OCI-LY7 (cell line): ENCODE measurements at regions of chr4 and their contacts with region 1.

Region 1: DNA sequence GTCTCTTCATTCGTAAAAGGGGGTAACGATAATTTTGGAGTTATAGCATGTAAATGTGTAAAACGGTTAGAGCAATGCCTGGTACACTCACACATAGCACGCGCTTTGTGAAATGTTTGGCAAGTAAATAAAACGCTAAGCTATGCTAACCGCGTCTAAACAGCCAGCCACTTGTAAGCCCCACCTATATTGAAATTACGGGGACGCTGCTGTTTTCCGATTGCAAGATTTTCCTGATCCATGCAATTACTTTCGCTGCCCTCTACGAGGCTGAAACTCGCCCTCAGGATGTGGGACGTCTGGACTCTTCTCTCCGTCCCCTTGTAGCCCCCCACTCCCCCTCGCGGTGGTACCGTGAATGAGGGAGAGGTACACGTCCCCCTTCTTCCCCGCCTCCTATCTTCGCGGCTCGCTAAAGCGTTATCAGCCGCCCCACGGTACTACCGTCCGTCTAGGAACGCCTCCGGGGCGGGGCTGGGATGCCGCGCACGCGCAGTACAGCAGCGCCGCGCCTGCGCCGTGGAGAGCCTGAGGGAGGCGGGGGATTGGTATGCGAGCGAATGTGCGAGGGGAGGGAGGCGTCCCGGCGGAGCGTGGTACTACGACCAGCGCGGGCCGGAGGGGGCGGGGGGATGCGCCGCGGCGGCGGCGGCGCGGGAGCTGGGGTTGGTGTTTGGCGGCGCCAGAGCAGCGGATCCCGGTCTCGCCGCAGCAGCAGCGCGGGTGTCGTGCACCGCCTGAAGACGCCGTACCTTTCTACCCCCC is at the start of gene STIM2:
- DNase-seq: peak; percentile 98
- H3K4me3 ChIP-seq: peak within 1 kb of the TSS; percentile 93
- H3K27ac ChIP-seq: peak within 1 kb of the TSS; percentile 87
- H3K4me1 ChIP-seq: peaks cover 33% of the 10 kb centered on the region
- CTCF ChIP-seq: peak; percentile 76
- total RNA-seq, gene STIM2: 108 and 122 TPM in 2 replicates

Region 2: DNA sequence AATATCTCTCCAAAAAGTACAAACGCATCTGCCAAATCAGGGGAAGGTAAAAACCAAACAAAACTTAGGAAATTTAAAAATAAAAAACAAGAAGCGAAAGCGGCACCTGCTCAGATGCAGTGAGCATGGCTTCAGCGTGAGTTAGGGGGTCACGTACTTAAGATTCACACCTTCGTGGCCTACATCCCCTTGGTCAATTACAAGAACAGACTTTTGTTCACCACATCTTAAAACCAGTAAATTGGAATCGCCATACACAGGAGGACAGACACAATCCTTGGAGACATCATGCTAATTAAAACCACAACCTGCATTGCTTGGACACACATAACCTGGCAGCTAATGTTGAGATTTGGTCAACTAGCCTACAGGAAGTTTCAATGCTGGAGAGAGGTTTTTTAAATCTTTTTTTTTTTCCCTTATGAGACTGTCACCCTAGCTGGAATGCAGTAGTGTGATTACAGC is 985.0 kb before region 1 on chr4:
- CTCF ChIA-PET with region 1: no interaction called
- POLR2A ChIA-PET with region 1: interaction called, 4 read pairs
- intact Hi-C with region 1: loop called (anchors 5 kb)
- DNase-seq: peak; percentile 96
- H3K4me3 ChIP-seq: peak overlapping the region; percentile 49
- H3K27ac ChIP-seq: peak overlapping the region; percentile 99
- H3K4me1 ChIP-seq: peaks cover 100% of the 10 kb centered on the region
- CTCF ChIP-seq: no peak

Region 3: DNA sequence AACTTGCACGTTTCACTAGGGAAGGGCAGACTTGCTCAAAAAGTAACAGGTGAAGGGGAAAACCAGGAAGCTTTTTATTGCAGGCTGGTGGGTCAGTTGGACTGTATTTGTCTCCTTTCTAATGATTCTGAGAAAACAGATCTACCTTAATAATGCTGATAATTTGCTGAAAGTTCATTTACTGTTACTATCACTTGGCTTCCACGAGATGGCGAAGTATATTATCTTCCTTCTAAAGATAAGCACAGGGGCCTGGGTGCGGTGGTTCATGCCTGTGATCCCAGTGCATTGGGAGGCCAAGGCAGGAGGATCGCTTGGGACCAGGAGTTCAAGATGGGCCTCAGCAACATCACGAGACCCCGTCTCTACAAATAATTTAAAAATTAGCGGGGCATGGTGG is 386.4 kb before region 1 on chr4:
- CTCF ChIA-PET with region 1: no interaction called
- POLR2A ChIA-PET with region 1: interaction called, 3 read pairs
- intact Hi-C with region 1: loop called (anchors 5 kb)
- DNase-seq: peak; percentile 41
- H3K4me3 ChIP-seq: no peak overlapping the region
- H3K27ac ChIP-seq: no peak overlapping the region
- H3K4me1 ChIP-seq: no peaks in the 10 kb centered on the region
- CTCF ChIP-seq: peak; percentile 70

Region 4: DNA sequence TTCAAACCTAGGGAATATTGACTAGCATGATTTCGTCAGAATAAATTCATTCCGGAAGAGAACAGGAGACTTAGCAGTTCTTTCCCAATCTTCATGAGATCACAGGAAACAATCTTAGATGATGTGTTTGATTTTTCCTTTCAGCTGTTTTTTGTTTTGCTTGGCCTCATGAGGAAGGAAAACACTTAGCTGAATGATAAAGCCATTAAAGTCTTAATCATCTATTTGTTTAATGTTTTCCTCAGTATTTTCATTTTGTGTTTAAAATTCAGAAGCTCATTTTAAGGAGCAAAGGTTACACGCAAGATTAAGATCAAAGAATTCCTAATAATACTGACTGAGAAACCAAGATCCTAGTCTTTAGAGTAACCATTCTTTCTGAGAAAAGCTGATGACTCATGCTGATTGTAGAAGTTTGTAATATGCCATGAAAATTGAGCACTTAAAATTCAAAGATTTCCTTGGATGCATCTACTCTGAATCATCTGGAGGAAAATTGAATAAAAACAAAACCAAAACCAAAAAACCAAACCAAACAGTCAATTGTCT is 291.8 kb before region 1 on chr4:
- CTCF ChIA-PET with region 1: no interaction called
- POLR2A ChIA-PET with region 1: no interaction called
- intact Hi-C with region 1: no loop called
- DNase-seq: no peak
- H3K4me3 ChIP-seq: no peak overlapping the region
- H3K27ac ChIP-seq: no peak overlapping the region
- H3K4me1 ChIP-seq: no peaks in the 10 kb centered on the region
- CTCF ChIP-seq: no peak

Region 5: GRCh38 chr4:26719954-26720552 is 140.3 kb before region 1 on chr4:
- CTCF ChIA-PET with region 1: no interaction called
- POLR2A ChIA-PET with region 1: no interaction called
- intact Hi-C with region 1: loop called (anchors 2 kb)
- DNase-seq: peak; percentile 49
- H3K4me3 ChIP-seq: no peak overlapping the region
- H3K27ac ChIP-seq: no peak overlapping the region
- H3K4me1 ChIP-seq: peaks cover 36% of the 10 kb centered on the region
- CTCF ChIP-seq: peak; percentile 97

Region 6: GRCh38 chr4:26826721-26827120 is 33.6 kb before region 1 on chr4:
- CTCF ChIA-PET with region 1: interaction called, 11 read pairs
- POLR2A ChIA-PET with region 1: interaction called, 440 read pairs
- intact Hi-C with region 1: loop called (anchors 1 kb)
- DNase-seq: peak; percentile 96
- H3K4me3 ChIP-seq: peak overlapping the region; percentile 41
- H3K27ac ChIP-seq: peak overlapping the region; percentile 98
- H3K4me1 ChIP-seq: peaks cover 82% of the 10 kb centered on the region
- CTCF ChIP-seq: no peak

Region 7: GRCh38 chr4:26885912-26886274 is 25.6 kb after region 1 on chr4:
- CTCF ChIA-PET with region 1: interaction called, 6 read pairs
- POLR2A ChIA-PET with region 1: interaction called, 110 read pairs
- intact Hi-C with region 1: loop called (anchors 1 kb)
- DNase-seq: peak; percentile 88
- H3K4me3 ChIP-seq: peak overlapping the region; percentile 61
- H3K27ac ChIP-seq: peak overlapping the region; percentile 95
- H3K4me1 ChIP-seq: peaks cover 62% of the 10 kb centered on the region
- CTCF ChIP-seq: no peak

Region 8: DNA sequence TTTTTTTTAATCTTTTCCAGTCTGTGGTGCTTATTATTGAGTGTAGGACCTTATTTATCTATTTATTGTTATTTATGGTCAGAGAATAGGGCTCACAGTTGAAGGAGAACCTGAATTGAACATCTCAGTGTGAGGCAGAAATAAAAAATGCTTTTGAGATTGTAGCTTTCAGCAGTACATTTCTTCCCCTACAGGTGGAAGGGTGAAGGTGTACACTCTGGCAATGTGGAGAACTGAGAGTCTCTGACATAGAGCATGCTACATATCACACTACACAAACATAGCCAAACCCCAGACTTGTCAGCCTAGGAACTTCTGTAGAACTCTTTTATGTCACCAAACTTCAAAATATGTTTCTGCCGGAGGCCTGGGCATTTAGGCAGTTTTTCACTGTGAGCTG is 140.5 kb after region 1 on chr4:
- CTCF ChIA-PET with region 1: interaction called, 3 read pairs
- POLR2A ChIA-PET with region 1: interaction called, 130 read pairs
- intact Hi-C with region 1: loop called (anchors 1 kb)
- DNase-seq: peak; percentile 70
- H3K4me3 ChIP-seq: no peak overlapping the region
- H3K27ac ChIP-seq: peak overlapping the region; percentile 38
- H3K4me1 ChIP-seq: peaks cover 65% of the 10 kb centered on the region
- CTCF ChIP-seq: peak; percentile 77